ENCODE measurements at regions of chr13 and their contacts with region 1.

Region 1: GRCh38 chr13:41061075-41061913 is at the start of gene WBP4:
- DNase-seq: peak; percentile 85
- H3K4me3 Mint-ChIP-seq: peak within 1 kb of the TSS; percentile 98
- H3K27ac Mint-ChIP-seq: peak within 1 kb of the TSS; percentile 99
- H3K4me1 Mint-ChIP-seq: peaks cover 72% of the 10 kb centered on the region
- H3K27me3 Mint-ChIP-seq: peaks cover 6% of the 10 kb centered on the region
- total RNA-seq, gene WBP4: 13.4 and 14.0 TPM in 2 replicates

Region 2: GRCh38 chr13:40922437-40923040 is 138.8 kb before region 1 on chr13:
- intact Hi-C with region 1: loop called (anchors 1 kb)
- DNase-seq: no peak
- H3K4me3 Mint-ChIP-seq: peak overlapping the region; percentile 77
- H3K27ac Mint-ChIP-seq: peak overlapping the region; percentile 70
- H3K4me1 Mint-ChIP-seq: peaks cover 10% of the 10 kb centered on the region
- H3K27me3 Mint-ChIP-seq: peaks cover 1% of the 10 kb centered on the region

Region 3: DNA sequence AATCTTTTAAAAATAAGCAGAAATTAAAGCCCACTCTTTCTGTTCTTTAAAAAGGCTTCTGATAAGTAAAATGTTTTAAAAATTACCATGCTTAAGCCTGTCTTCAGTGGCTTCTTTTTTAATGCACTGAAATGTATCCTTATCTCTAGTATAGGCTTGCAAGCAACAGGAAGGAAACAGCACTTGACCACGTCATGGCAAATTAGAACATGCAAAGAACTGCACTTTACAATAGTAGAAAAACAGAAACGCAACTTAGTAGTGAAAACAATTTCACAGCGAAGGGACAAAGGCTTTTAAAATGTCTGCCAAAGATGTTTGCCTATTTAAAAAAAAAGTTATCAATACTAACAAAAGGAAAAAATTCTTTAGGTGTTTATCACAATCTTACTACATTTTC is 78.5 kb before region 1 on chr13:
- intact Hi-C with region 1: loop called (anchors 1 kb)
- DNase-seq: peak; percentile 62
- H3K4me3 Mint-ChIP-seq: peak overlapping the region; percentile 91
- H3K27ac Mint-ChIP-seq: peak overlapping the region; percentile 90
- H3K4me1 Mint-ChIP-seq: peaks cover 79% of the 10 kb centered on the region
- H3K27me3 Mint-ChIP-seq: no peaks in the 10 kb centered on the region

Region 4: GRCh38 chr13:41132512-41133152 is 71.3 kb after region 1 on chr13 and contains the start of gene KBTBD6:
- intact Hi-C with region 1: loop called (anchors 1 kb)
- DNase-seq: peak; percentile 92
- H3K4me3 Mint-ChIP-seq: peak within 1 kb of the TSS; percentile 92
- H3K27ac Mint-ChIP-seq: peak within 1 kb of the TSS; percentile 93
- H3K4me1 Mint-ChIP-seq: peaks cover 45% of the 10 kb centered on the region
- H3K27me3 Mint-ChIP-seq: peaks cover 3% of the 10 kb centered on the region
- total RNA-seq, gene KBTBD6: 6.6 and 6.8 TPM in 2 replicates

Region 5: DNA sequence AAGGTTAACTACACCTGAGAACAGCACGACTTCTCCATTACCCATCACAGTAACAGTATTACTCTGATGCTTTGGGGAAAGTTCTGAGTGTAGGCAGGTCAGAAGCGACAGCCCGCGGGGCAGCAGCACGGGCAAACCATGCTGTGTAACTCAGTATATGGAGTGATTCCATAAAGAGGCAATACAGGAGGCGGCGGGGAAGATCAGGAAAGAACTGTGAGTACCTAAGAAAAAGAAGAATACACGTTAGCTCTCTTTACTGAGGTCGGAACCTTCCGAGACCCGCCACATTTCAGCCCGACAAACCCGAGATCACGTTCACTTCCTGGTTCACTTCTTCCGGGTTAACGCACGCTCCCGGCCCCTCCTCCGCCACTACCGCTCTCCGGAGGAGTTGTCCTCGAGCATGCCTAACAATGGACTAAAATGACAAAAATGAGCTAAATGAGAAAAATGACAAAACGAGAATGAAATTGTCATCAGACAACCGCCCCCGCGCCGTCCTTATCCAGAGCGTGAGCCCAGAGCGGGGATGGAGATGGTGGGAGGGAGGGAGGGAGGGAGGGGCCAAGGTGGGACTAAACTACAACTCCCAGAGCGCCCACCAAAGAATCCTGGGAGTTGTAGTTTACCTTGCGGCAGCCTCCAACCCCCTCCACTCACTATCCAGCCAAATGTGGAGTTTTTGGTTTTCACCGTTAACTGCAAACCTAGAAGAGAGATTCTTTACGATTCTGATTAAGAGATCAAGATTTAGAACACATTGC is 202.2 kb after region 1 on chr13 and contains the start of gene MTRF1:
- intact Hi-C with region 1: loop called (anchors 1 kb)
- DNase-seq: peak; percentile 72
- H3K4me3 Mint-ChIP-seq: peak within 1 kb of the TSS; percentile 95
- H3K27ac Mint-ChIP-seq: peak within 1 kb of the TSS; percentile 100
- H3K4me1 Mint-ChIP-seq: peaks cover 12% of the 10 kb centered on the region
- H3K27me3 Mint-ChIP-seq: no peaks in the 10 kb centered on the region
- total RNA-seq, gene MTRF1: 17.5 and 20.2 TPM in 2 replicates

Region 6: DNA sequence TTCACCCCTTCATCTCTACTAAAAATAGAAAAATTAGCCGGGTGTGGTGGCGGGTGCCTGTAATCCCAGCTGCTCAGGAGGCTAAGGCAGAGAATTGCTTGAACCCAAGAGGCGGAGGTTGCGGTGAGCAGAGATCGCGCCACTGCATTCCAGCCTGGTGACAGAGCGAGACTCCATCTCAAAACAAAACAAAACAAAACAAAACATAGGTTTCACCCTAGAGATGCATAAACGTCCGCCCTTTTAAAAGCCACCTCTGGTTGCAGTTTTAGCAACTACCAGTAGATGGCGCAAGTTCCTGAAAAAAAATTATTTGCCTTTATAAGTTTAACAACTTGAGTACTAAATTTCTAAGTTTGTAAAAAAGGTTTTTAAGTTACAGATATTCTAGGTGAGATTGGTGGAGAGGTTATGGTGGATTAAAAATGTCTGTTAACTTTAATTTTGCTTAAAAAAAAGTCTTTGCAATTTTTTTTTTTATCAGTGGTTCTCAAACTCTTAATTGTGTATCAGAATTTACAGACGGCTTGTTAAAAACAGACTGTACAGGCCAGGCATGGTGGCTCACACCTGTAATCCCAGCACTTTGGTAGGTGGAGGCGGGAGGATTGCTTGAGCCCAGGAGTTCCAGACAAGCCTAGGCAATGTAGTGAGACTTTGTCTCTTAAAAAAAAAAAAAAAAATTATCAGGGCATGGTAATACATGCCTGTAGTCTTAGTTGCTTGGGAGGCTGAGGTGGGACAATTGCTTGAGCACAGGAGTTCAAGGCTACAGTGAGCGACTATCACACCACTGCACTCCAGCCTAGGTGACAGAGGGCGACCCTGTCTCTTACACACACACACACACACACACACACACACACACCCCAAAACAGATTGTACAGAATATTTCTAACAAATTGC is 291.9 kb after region 1 on chr13:
- intact Hi-C with region 1: loop called (anchors 5 kb)
- DNase-seq: peak; percentile 47
- H3K4me3 Mint-ChIP-seq: no peak overlapping the region
- H3K27ac Mint-ChIP-seq: peak overlapping the region; percentile 24
- H3K4me1 Mint-ChIP-seq: peaks cover 38% of the 10 kb centered on the region
- H3K27me3 Mint-ChIP-seq: no peaks in the 10 kb centered on the region

Region 7: GRCh38 chr13:42048682-42049453 is 987.6 kb after region 1 on chr13:
- intact Hi-C with region 1: loop called (anchors 5 kb)
- DNase-seq: peak; percentile 59
- H3K4me3 Mint-ChIP-seq: peak overlapping the region; percentile 88
- H3K27ac Mint-ChIP-seq: peak overlapping the region; percentile 80
- H3K4me1 Mint-ChIP-seq: peaks cover 25% of the 10 kb centered on the region
- H3K27me3 Mint-ChIP-seq: peaks cover 16% of the 10 kb centered on the region

Measured in activated T-helper 1 cell treated with anti-CD3 and anti-CD28 coated beads, Interleukin-12 subunit alpha, Interleukin-12 subunit beta, Interleukin-2, Interleukin-4 antibody, amounts not matched to agents 30 ng/mL and 10 ng/mL and 1 ng/mL, durations not matched to agents 14 hours and 24 hours and 36 hours (primary cell).